ENCODE measurements at regions of chr11 and their contacts with region 1.

Region 1: GRCh38 chr11:124673333-124674167 is at the starts of genes SIAE and SPA17:
- DNase-seq: peak; percentile 94
- ATAC-seq: peak; percentile 90
- H3K4me3 Mint-ChIP-seq: peak within 1 kb of the TSS; percentile 84
- H3K27ac Mint-ChIP-seq: peak within 1 kb of the TSS; percentile 86
- H3K4me1 Mint-ChIP-seq: peaks cover 30% of the 10 kb centered on the region
- H3K27me3 Mint-ChIP-seq: no peaks in the 10 kb centered on the region
- total RNA-seq, gene SIAE: 9.4 to 12.2 TPM
- total RNA-seq, gene SPA17: 3.9 to 4.7 TPM

Region 2: DNA sequence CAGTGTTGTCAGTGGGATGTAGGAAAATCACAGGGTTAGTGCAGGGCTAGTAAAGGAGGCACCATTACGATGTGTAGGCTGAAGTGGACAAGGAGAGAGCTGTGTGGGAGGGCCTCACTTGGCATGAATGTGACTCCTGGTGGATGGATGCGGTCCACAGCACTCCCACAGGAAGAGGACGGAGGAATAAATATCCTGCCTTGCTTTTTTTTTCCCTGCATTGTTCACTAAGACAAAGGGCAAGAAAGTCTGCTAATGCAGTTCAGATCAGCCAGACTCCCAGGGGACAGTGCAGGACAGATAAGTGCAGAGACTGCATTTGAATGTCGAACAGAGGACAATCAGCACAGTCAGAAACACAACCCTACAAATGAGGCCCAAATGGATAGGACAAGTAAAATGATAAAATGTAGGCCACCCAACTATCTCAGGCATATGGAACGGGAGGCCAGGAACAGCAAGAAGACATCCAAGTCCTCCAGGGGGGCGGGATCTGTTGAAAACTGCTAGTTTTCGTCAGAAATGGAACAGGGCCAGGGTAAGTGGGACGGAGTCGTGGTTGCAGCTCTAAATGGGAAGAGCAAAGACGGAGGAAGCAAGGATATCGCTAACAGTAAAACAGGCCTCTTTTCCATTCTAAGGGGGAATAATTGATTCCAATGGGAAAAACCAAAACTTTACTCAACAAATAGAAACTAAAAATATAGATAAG is 202.9 kb before region 1 on chr11:
- CTCF ChIA-PET with region 1: no interaction called
- POLR2A ChIA-PET with region 1: no interaction called
- intact Hi-C with region 1: no loop called
- DNase-seq: no peak
- ATAC-seq: no peak
- H3K4me3 Mint-ChIP-seq: no peak overlapping the region
- H3K27ac Mint-ChIP-seq: no peak overlapping the region
- H3K4me1 Mint-ChIP-seq: no peaks in the 10 kb centered on the region
- H3K27me3 Mint-ChIP-seq: peaks cover 13% of the 10 kb centered on the region

Region 3: DNA sequence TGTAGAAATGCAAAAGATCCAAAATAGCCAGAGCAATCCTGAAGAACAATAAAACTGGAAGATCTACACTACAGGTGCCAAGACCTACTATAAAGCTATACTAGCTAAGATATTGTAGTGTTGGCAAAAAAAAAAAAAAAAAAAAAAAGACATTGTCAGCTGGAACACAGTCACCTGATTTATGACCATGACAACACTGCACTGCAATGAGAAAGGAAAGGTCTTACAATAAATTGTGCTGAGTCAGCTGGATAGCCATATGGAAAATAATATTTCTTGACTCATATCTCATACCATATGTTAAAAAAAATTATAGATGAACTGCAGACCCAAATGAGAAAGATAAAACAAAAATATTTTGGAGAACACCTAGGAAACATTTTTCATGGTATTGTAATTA is 65.4 kb before region 1 on chr11:
- CTCF ChIA-PET with region 1: no interaction called
- POLR2A ChIA-PET with region 1: no interaction called
- intact Hi-C with region 1: no loop called
- DNase-seq: no peak
- ATAC-seq: no peak
- H3K4me3 Mint-ChIP-seq: no peak overlapping the region
- H3K27ac Mint-ChIP-seq: no peak overlapping the region
- H3K4me1 Mint-ChIP-seq: peaks cover 13% of the 10 kb centered on the region
- H3K27me3 Mint-ChIP-seq: no peaks in the 10 kb centered on the region

Region 4: DNA sequence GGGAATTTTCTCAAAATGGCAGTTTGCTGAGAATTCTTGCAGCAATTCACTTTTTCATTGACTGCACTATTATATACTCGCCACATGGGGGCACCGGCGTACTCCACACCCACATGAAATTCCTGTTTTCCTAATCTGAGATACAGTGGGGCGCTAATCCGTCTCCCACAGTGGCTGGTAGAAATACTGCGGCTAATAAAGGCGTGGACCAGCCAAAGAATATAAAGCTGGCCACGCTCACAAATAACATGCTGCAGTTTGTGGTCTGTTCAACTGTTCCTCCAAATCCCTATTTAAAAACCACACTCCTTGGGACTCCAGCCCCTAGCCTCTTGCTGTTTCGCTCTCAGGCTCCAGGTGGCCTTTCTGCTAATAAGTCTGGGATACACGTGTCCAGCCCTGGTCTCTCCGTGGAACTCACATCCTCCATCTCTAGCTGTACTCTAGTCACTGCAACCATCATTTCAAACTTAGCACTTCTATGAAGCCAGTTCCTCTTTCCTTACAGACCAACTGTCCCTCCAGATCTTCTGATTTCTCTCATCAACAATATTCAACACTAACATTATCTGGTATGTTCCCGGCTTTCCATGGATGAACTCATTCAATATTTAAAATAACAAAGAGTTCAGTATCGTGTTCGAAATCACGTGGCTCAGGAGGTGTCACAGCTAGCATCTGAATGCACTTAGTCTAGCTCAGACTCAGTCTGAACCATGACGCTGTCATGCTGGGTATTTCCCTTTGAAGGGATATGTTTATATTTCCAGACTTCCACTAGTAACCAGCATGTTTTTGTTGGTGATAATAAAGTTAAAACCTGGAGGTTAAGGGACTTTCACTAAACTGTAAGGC is 28.9 kb before region 1 on chr11:
- CTCF ChIA-PET with region 1: interaction called, 7 read pairs
- POLR2A ChIA-PET with region 1: interaction called, 3 read pairs
- intact Hi-C with region 1: loop called in 1 of 2 experiments (anchors 1 kb)
- DNase-seq: peak; percentile 38
- ATAC-seq: no peak
- H3K4me3 Mint-ChIP-seq: no peak overlapping the region
- H3K27ac Mint-ChIP-seq: no peak overlapping the region
- H3K4me1 Mint-ChIP-seq: peaks cover 3% of the 10 kb centered on the region
- H3K27me3 Mint-ChIP-seq: no peaks in the 10 kb centered on the region

Region 5: DNA sequence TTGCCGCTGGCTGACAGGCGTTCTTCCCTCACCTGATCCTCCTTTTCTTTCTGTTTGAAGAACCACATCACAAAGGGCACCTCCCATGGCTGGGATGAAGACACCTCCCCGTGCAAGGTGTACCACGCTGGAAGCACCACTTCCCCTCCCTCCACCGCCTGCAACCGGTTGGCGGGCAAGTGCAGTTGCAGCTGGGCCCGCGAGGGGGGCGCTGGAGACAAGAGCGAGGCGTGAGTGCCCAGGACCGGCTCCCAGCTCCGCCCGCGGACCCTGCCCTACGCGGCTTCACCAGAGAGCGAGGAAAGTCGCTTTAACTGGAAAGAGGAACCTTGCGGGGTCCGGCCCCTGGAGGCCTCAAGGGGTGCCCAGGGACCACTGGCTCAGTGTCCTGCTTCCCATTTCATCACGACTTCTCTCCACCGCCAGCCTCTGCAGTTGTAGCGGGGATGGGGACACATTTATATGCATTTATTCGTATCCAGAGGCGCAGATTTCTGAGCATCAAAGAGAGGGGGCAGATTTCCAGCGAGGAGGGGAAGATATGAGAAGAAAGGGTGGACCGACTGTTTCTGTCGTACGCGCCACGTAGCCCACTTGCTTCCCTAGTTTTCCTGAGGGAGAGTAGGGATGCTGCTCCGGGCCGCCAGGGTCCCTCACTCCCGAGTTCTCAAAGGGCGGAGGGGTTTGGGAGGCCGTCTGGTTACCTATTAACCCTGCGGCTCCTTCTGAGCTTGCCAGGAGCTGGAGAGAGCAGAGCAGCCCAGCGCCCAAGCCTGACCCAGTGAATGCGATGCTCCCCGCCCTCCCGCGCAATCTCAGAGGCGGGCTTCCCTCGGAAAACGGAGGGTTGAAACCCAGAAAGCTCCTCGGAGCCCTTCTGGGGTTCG is 85.0 kb after region 1 on chr11:
- CTCF ChIA-PET with region 1: interaction called, 64 read pairs
- POLR2A ChIA-PET with region 1: interaction called, 3 read pairs
- intact Hi-C with region 1: loop called (anchors 1 kb)
- DNase-seq: peak; percentile 88
- ATAC-seq: peak; percentile 83
- H3K4me3 Mint-ChIP-seq: peak overlapping the region; percentile 57
- H3K27ac Mint-ChIP-seq: no peak overlapping the region
- H3K4me1 Mint-ChIP-seq: peaks cover 21% of the 10 kb centered on the region
- H3K27me3 Mint-ChIP-seq: peaks cover 46% of the 10 kb centered on the region

Region 6: GRCh38 chr11:124837491-124837856 is 163.9 kb after region 1 on chr11:
- CTCF ChIA-PET with region 1: interaction called, 49 read pairs
- POLR2A ChIA-PET with region 1: interaction called, 3 read pairs
- intact Hi-C with region 1: loop called (anchors 1 kb)
- DNase-seq: no peak
- ATAC-seq: peak; percentile 50
- H3K4me3 Mint-ChIP-seq: no peak overlapping the region
- H3K27ac Mint-ChIP-seq: no peak overlapping the region
- H3K4me1 Mint-ChIP-seq: peaks cover 15% of the 10 kb centered on the region
- H3K27me3 Mint-ChIP-seq: peaks cover 57% of the 10 kb centered on the region

Region 7: GRCh38 chr11:124953753-124954589 is 280.4 kb after region 1 on chr11 and contains the start of gene CCDC15:
- CTCF ChIA-PET with region 1: interaction called, 3 read pairs
- POLR2A ChIA-PET with region 1: no interaction called
- intact Hi-C with region 1: loop called (anchors 2 to 5 kb)
- DNase-seq: peak; percentile 97
- ATAC-seq: peak; percentile 98
- H3K4me3 Mint-ChIP-seq: no peak within 1 kb of the TSS
- H3K27ac Mint-ChIP-seq: no peak within 1 kb of the TSS
- H3K4me1 Mint-ChIP-seq: peaks cover 4% of the 10 kb centered on the region
- H3K27me3 Mint-ChIP-seq: no peaks in the 10 kb centered on the region
- total RNA-seq, gene CCDC15: 5.6 to 6.7 TPM

Region 8: DNA sequence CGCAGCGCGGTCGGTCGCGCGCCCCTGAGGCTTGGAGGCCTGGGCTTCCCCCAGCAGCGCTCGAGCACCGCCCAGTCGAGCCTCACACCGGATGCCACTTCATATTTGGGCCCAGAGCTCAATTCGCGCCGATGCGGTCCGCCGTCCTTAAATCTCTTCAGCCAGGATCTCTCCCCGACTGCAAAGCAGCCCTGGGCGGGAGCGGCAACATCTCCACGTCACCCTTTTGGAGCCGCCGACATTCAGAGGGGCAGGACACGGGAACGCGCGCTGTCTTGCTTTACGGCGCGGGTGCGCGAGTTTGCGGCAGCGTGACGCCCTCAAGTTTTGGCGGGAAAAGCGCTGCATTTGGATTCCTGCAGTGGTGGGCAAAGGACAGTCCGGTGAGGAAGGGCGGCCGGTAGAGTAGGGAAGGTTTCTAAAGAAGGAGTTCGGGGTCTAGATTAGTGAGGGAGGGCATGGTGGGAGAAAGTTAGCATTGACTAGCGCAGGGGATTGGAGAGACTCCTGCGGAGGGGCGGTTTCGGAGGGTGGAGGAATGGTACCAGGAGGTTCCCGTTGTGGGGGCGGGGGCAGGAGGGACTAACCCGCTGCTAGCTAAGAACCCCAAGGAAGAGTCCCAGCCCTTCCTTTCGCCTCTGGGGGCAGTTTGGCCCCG is 952.2 kb after region 1 on chr11:
- CTCF ChIA-PET with region 1: no interaction called
- POLR2A ChIA-PET with region 1: no interaction called
- intact Hi-C with region 1: loop called in 1 of 2 experiments (anchors 5 kb)
- DNase-seq: peak; percentile 92
- ATAC-seq: peak; percentile 88
- H3K4me3 Mint-ChIP-seq: peak overlapping the region; percentile 88
- H3K27ac Mint-ChIP-seq: peak overlapping the region; percentile 98
- H3K4me1 Mint-ChIP-seq: peaks cover 17% of the 10 kb centered on the region
- H3K27me3 Mint-ChIP-seq: no peaks in the 10 kb centered on the region